ENCODE measurements at regions of chr15 and their contacts with region 1.

Region 1: DNA sequence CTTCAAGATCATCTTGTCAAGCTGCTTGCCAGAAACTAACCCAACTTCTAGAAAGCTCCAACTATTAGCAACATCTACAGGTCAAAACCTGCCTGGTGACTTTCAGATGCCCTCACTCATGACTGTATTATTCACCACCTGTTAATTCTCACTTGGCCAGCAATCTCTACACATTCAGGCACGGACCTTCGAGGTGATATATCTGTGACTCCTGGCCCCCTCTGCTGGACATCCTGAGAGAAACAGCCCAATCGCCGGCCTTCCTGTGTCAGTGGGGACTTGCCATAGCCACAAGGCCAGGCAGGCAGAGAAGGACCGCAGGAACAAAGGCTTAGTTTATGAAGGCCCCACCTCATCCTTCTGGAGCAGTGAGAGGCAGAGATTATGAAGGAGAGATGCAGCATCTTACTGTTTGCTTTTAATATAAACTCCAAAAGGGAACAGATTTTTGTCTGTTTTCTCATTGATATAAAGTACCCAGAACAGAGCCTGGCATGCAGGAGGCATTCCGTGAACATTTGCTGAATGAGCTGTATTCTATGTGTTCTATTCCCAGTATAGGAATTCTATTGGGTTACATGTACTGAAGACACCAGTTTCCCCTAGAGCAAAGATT is 24.4 kb upstream of the OCA2 start:
- DNase-seq: peak; percentile 87
- H3K4me3 ChIP-seq: peak overlapping the region in 1 of 2 experiments; percentile 14; a peak in 1 of 4 replicates
- H3K27ac ChIP-seq: no peak overlapping the region
- H3K4me1 ChIP-seq: no peaks in the 10 kb centered on the region; a peak in 1 of 4 replicates
- H3K27me3 ChIP-seq: no peaks in the 10 kb centered on the region
- CTCF ChIP-seq: peak; percentile 83
- EP300 ChIP-seq: no peak
- RAD21 ChIP-seq: peak; percentile 80

Region 2: GRCh38 chr15:28098766-28099554 is 24.6 kb before region 1 on chr15 and contains the start of gene OCA2:
- CTCF ChIA-PET with region 1: interaction called, 21 read pairs
- POLR2A ChIA-PET with region 1: no interaction called
- DNase-seq: peak; percentile 95
- H3K4me3 ChIP-seq: peak within 1 kb of the TSS; percentile 32 to 45; a peak in 3 of 4 replicates
- H3K27ac ChIP-seq: no peak within 1 kb of the TSS
- H3K4me1 ChIP-seq: peaks cover 0 to 16% of the 10 kb centered on the region in 2 experiments; a peak in 1 of 4 replicates
- H3K27me3 ChIP-seq: peaks cover 13% of the 10 kb centered on the region
- CTCF ChIP-seq: peak; percentile 47
- EP300 ChIP-seq: no peak
- RAD21 ChIP-seq: no peak; the same call in 1 of the 2 replicates
- polyA plus RNA-seq, gene OCA2: 0.10 and 0.16 TPM in 2 replicates

Region 3: DNA sequence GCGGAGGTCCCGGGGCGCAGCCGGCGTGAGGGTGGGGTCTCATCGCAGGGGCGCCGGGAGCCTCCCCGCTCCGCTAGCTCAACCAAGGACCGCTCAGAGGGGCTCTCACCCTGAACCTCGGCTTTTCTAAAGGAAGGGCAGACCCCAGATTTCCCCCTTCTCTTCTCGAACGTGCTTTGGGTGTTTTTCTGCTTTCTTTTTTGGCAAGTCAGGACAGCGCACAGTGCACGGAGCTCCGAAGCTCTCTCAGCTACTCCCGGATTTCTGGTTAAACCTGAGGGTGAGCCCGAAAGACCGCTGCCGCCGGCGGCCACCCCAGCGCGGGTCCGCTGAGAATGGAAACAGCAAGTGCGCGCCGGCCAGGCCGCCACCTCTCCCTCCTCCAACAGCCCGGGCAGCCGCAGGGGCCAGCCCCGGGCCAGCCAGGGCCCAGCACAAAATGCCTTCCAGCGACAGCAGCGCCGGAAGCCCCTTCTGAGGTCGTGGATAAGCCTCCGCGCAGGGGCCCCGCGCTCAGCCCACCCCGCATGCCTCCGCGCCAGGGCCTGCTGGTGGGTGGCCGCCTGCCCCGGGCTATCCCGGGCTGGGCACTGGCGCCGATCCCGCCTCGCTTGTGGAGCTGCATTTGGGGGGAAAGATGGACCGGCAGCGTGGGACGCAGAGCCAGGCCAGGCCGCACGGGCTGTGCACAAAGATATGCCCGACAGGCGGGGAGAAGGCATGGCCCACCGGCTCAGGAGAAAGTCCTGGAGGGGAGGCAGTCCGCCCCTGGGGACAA is 16.2 kb before region 1 on chr15:
- CTCF ChIA-PET with region 1: interaction called, 21 read pairs
- POLR2A ChIA-PET with region 1: no interaction called
- DNase-seq: no peak
- H3K4me3 ChIP-seq: no peak overlapping the region
- H3K27ac ChIP-seq: no peak overlapping the region
- H3K4me1 ChIP-seq: no peaks in the 10 kb centered on the region; a peak in 1 of 4 replicates
- H3K27me3 ChIP-seq: no peaks in the 10 kb centered on the region
- CTCF ChIP-seq: no peak
- EP300 ChIP-seq: no peak
- RAD21 ChIP-seq: no peak

Measured in SK-N-SH (cell line).